Heart right ventricle (tissue), 16 donors: ENCODE measurements at regions of chr5 and their contacts with region 1.

Region 1: DNA sequence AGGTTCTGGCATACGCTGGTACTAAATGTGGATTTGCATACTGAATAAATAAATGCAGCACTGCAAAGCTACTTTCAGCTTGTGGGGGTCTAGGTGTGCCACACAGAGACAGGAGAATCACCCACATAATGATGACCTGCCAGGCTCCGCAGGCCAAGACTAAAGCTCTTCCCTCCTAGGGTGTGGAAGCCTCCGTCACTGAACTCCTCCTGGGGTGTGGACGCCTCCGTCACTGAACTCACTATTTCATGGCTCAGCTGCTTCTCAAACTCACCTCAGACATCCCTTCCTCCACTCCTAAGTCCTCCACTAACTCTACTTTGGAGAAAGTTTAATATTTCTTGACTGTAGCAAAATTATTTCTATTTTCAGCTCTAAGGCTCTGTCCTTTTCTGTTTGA is 65.3 kb upstream of the GOLPH3 start:
- DNase-seq: no peak
- ATAC-seq: no peak
- H3K4me3 ChIP-seq: no peak overlapping the region
- H3K27ac ChIP-seq: no peak overlapping the region
- H3K4me1 ChIP-seq: peaks cover 0 to 7% (median 1%) of the 10 kb centered on the region in 9 donors
- H3K27me3 ChIP-seq: no peaks in the 10 kb centered on the region
- CTCF ChIP-seq: no peak

Region 2: GRCh38 chr5:32276173-32276853 is 36.9 kb after region 1 on chr5:
- intact Hi-C with region 1: no loop called
- DNase-seq: no peak
- ATAC-seq: peak; percentile 56 to 81 (median 74)
- H3K4me3 ChIP-seq: no peak overlapping the region
- H3K27ac ChIP-seq: peak overlapping the region in 9 of 10 donors; percentile 34 to 77 (median 65)
- H3K4me1 ChIP-seq: peaks cover 12 to 69% (median 50%) of the 10 kb centered on the region in 9 donors
- H3K27me3 ChIP-seq: no peaks in the 10 kb centered on the region
- CTCF ChIP-seq: no peak

Region 3: GRCh38 chr5:32319392-32319791 is 80.0 kb after region 1 on chr5:
- intact Hi-C with region 1: loop called in 3 of 10 experiments (anchors 5 kb)
- DNase-seq: no peak
- ATAC-seq: no peak
- H3K4me3 ChIP-seq: no peak overlapping the region
- H3K27ac ChIP-seq: no peak overlapping the region
- H3K4me1 ChIP-seq: no peaks in the 10 kb centered on the region
- H3K27me3 ChIP-seq: no peaks in the 10 kb centered on the region
- CTCF ChIP-seq: no peak

Region 4: DNA sequence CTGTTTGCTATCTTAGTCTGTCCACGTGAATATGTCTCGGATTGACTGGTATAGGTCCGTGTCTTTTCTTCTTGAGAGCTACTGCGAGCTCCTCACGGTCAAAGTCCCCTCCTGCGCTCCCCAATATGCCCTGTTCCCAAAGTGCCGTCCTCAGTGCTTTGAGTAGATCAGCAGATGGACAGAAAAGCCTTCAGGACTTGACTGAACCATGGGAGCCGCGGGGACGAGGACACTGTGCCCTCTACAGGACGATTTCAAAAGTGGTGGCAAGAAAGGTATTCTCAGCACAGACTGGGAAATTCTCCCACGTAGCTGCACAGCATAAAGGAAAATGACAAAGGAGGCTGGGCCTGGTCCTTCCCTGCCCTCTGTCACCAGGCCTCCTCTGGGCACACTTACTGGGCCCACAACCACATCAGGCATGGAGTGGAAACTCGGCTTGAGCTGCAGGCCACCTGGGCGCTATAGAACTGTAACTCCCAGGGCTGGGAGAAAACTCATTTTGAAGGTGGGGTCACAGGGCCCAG is 90.0 kb after region 1 on chr5:
- intact Hi-C with region 1: loop called in 3 of 10 experiments (anchors 2 to 5 kb)
- DNase-seq: peak; percentile 46 to 64
- ATAC-seq: peak; percentile 80 to 94 (median 90)
- H3K4me3 ChIP-seq: no peak overlapping the region
- H3K27ac ChIP-seq: peak overlapping the region in 1 of 10 donors; percentile 14
- H3K4me1 ChIP-seq: peaks cover 0 to 20% (median 4%) of the 10 kb centered on the region in 9 donors
- H3K27me3 ChIP-seq: no peaks in the 10 kb centered on the region
- CTCF ChIP-seq: peak; percentile 55 to 82 (median 76)